ENCODE measurements at regions of chr3 and their contacts with region 1.

Region 1: GRCh38 chr3:42539869-42540714 is 37.6 kb downstream of the VIPR1 start:
- DNase-seq: peak; percentile 56 to 97
- H3K4me3 ChIP-seq: no peak overlapping the region
- H3K27ac ChIP-seq: no peak overlapping the region
- H3K4me1 ChIP-seq: peaks cover 2 to 6% (median 4%) of the 10 kb centered on the region in 4 experiments
- H3K27me3 ChIP-seq: peaks cover 0 to 2% (median 0%) of the 10 kb centered on the region in 4 experiments; a peak in 1 of 7 replicates
- CTCF ChIP-seq: peak; percentile 75 to 92 (median 90)
- EP300 ChIP-seq: no peak
- POLR2A ChIP-seq: no peak
- RAD21 ChIP-seq: peak; percentile 61 to 82

Region 2: DNA sequence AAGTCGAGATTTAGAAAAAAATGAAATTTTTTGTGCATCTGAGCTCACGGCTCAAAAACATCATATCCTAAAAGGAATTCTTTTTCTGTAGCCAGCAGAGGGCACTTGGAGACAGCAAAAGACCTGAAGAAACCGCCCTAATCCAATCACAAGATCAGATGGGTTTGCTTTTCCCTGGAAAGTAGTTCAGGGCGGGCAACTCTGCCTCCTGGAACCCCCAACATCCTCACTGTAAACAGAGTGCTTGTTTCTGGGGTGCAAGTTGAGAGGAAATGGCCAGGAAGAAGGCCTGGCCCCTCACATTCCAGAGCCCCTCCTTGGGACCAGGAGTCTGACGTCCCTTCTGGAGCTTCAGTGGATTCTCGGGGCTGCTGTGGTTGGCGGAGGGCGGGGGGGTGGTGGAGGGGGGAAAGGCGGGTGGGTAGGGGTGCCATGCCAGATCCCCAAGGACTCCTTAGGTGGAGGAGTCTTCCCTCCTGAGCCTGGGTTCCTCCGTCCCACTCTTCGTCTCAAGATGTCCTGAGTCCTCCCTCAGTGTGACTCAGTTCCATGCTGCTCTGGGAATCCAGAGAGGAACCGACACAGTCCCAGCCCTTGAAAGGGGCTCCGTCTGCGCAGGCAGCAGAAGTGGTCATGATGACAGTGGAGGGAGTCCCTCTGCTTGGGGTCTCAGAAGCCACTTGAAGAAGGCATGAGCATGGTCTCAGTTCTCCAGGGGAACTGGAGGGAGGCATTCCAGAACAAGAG is 310.0 kb before region 1 on chr3:
- CTCF ChIA-PET with region 1: interaction called, 69 read pairs
- POLR2A ChIA-PET with region 1: no interaction called
- DNase-seq: no peak
- H3K4me3 ChIP-seq: no peak overlapping the region
- H3K27ac ChIP-seq: no peak overlapping the region
- H3K4me1 ChIP-seq: 0 out of 7 replicates have a peak, but pooled peaks cover 0 to 4% (median 0%) of the 10 kb centered on the region in 4 experiments
- H3K27me3 ChIP-seq: no peaks in the 10 kb centered on the region; a peak in 1 of 7 replicates
- CTCF ChIP-seq: peak in 2 of 3 experiments; percentile 61 to 67; a peak in 3 of 4 replicates
- EP300 ChIP-seq: no peak
- POLR2A ChIP-seq: no peak
- RAD21 ChIP-seq: peak; percentile 86 to 88

Region 3: DNA sequence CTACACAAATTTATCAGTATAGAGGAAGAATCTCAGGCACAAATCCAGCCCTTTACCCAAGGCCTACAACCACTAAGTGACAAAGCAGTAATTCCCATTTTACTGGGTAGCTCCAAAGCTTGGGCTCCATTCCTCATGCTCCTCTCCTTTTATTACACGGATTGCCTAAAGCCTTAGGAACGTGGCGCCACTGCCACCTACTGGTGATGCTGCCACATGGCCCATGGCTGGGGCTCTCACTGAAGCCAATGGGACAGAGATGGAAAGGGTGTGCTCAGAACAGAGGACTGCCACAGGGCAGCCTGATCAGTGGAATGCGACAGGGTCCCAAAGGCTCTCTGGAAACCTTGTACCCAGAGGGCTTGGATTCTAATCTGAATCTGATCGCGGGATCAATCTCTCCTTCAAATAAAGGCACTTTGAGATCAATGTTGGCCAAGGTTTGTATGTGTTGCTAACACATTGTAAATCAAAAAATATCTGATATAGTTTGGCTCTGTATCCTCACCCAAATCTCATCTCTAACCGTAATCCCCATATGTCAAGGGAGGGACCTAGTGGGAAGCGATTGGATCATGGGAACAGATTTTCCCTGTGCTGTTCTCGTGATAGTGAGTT is 96.2 kb before region 1 on chr3:
- CTCF ChIA-PET with region 1: interaction called, 21 read pairs
- POLR2A ChIA-PET with region 1: no interaction called
- DNase-seq: peak; percentile 80 to 98
- H3K4me3 ChIP-seq: no peak overlapping the region
- H3K27ac ChIP-seq: no peak overlapping the region
- H3K4me1 ChIP-seq: peaks cover 4 to 34% (median 23%) of the 10 kb centered on the region in 4 experiments; a peak in 6 of 7 replicates
- H3K27me3 ChIP-seq: no peaks in the 10 kb centered on the region
- CTCF ChIP-seq: peak; percentile 97 to 98 (median 98)
- EP300 ChIP-seq: no peak
- POLR2A ChIP-seq: no peak
- RAD21 ChIP-seq: peak; percentile 100

Region 4: GRCh38 chr3:42476225-42477125 is 63.6 kb before region 1 on chr3:
- CTCF ChIA-PET with region 1: interaction called, 12 read pairs
- POLR2A ChIA-PET with region 1: no interaction called
- DNase-seq: no peak
- H3K4me3 ChIP-seq: no peak overlapping the region
- H3K27ac ChIP-seq: no peak overlapping the region
- H3K4me1 ChIP-seq: no peaks in the 10 kb centered on the region; a peak in 1 of 7 replicates
- H3K27me3 ChIP-seq: peaks cover 0 to 1% (median 0%) of the 10 kb centered on the region in 4 experiments; a peak in 2 of 7 replicates
- CTCF ChIP-seq: no peak
- EP300 ChIP-seq: no peak
- POLR2A ChIP-seq: no peak
- RAD21 ChIP-seq: no peak

Region 5: DNA sequence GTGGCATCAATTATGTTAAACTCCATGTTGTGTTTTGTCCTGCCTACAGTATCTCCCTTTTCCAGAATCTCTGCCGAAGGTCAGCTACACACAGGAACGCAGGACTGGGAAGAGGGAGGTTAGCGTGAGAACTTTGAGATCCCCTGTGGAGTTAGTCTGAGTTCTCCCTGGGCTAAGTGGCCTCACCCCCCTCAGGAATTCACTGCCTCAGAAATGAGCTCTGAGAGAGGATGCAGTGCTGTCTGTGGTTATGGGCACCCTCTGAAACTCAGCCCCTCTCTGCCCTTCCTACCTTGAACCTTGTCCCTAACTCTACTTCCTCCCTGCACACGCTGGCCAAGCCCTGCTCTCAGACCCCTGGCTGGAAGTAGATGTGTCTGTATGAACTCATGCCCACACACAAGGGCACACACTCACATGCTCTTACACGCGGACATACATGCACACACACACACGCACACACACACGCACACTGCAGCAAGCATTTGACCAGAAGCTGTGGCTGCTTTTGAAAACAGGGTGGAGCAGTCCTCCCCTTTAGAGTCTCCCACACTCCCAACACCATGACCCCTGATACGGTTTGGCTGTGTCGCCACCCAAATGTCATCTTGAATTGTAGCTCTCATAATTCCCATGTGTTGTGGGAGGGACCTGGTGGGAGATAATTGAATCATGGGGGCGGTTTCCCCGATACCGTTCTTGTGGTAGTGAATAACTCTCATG is 42.9 kb before region 1 on chr3:
- CTCF ChIA-PET with region 1: interaction called, 52 read pairs
- POLR2A ChIA-PET with region 1: interaction called, 13 read pairs
- DNase-seq: peak; percentile 61 to 78
- H3K4me3 ChIP-seq: peak overlapping the region in 1 of 4 experiments; percentile 23; a peak in 1 of 8 replicates
- H3K27ac ChIP-seq: no peak overlapping the region
- H3K4me1 ChIP-seq: peaks cover 0 to 4% (median 3%) of the 10 kb centered on the region in 4 experiments; a peak in 6 of 7 replicates
- H3K27me3 ChIP-seq: peaks cover 0 to 41% (median 27%) of the 10 kb centered on the region in 4 experiments; a peak in 6 of 7 replicates
- CTCF ChIP-seq: no peak
- EP300 ChIP-seq: no peak
- POLR2A ChIP-seq: no peak
- RAD21 ChIP-seq: peak in 1 of 2 experiments; percentile 3; a peak in 1 of 4 replicates

Region 6: DNA sequence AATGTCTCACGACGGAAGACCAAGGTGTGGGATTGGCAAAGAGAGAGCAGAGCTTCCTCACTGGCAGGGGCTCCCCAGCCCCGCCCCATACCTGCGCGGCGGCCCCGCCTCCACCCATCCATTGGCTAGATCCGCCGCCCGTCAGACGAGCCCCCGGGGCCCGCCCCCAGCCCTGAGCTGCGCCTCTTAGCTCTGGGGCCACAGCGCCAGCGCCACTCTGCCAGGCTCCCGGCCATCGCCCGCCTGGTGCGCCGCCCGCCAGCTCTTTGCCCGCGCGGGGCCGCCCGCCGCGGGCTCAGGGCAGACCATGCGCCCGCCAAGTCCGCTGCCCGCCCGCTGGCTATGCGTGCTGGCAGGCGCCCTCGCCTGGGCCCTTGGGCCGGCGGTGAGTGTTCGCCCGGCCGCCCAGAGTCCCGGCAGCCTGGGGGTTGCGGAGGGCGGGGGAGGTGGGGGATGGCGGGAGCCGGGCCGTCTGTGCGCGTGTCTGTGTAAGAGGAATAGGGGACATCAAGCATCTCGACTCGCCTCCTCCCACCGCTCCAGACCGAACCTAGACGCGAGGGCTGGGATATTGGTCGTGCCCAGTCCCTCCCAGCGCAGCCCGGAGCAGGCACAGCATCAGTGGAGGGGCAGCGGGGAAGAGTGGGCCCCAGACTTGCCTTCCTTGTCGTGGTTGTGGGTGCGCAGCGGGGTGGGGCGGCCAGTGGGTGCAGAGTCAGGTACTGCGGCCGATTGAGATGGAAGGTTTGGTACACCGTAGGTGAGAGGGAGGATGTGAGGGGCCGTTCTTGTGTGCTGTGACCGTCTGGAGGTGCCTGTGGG is 37.5 kb before region 1 on chr3 and contains the start of gene VIPR1:
- CTCF ChIA-PET with region 1: interaction called, 458 read pairs
- POLR2A ChIA-PET with region 1: interaction called, 13 read pairs
- DNase-seq: peak; percentile 73 to 99
- H3K4me3 ChIP-seq: peak within 1 kb of the TSS; percentile 50 to 77 (median 68)
- H3K27ac ChIP-seq: no peak within 1 kb of the TSS
- H3K4me1 ChIP-seq: peaks cover 0 to 12% (median 2%) of the 10 kb centered on the region in 4 experiments; a peak in 3 of 7 replicates
- H3K27me3 ChIP-seq: peaks cover 0 to 52% (median 35%) of the 10 kb centered on the region in 4 experiments; a peak in 6 of 7 replicates
- CTCF ChIP-seq: no peak
- EP300 ChIP-seq: no peak
- POLR2A ChIP-seq: peak in 1 of 2 experiments; percentile 65; a peak in 2 of 3 replicates
- RAD21 ChIP-seq: 0 out of 4 replicates have a peak, but pooled peaks of 1 of the 2 experiments have one; percentile 2
- total RNA-seq, gene VIPR1: 10.1 and 11.3 TPM in 2 replicates

Region 7: GRCh38 chr3:42552830-42553229 is 12.7 kb after region 1 on chr3:
- CTCF ChIA-PET with region 1: interaction called, 91 read pairs
- POLR2A ChIA-PET with region 1: no interaction called
- DNase-seq: no peak
- H3K4me3 ChIP-seq: no peak overlapping the region
- H3K27ac ChIP-seq: no peak overlapping the region
- H3K4me1 ChIP-seq: no peaks in the 10 kb centered on the region
- H3K27me3 ChIP-seq: no peaks in the 10 kb centered on the region
- CTCF ChIP-seq: no peak
- EP300 ChIP-seq: no peak
- POLR2A ChIP-seq: no peak
- RAD21 ChIP-seq: no peak